ENCODE measurements at regions of chr1 and their contacts with region 1.

Region 1: GRCh38 chr1:9867408-9868243 is 42.4 kb downstream of the CTNNBIP1 start:
- DNase-seq: peak; percentile 88
- H3K4me3 ChIP-seq: no peak overlapping the region
- H3K27ac ChIP-seq: no peak overlapping the region
- H3K4me1 ChIP-seq: no peaks in the 10 kb centered on the region
- H3K27me3 ChIP-seq: no peaks in the 10 kb centered on the region
- CTCF ChIP-seq: peak; percentile 99

Region 2: DNA sequence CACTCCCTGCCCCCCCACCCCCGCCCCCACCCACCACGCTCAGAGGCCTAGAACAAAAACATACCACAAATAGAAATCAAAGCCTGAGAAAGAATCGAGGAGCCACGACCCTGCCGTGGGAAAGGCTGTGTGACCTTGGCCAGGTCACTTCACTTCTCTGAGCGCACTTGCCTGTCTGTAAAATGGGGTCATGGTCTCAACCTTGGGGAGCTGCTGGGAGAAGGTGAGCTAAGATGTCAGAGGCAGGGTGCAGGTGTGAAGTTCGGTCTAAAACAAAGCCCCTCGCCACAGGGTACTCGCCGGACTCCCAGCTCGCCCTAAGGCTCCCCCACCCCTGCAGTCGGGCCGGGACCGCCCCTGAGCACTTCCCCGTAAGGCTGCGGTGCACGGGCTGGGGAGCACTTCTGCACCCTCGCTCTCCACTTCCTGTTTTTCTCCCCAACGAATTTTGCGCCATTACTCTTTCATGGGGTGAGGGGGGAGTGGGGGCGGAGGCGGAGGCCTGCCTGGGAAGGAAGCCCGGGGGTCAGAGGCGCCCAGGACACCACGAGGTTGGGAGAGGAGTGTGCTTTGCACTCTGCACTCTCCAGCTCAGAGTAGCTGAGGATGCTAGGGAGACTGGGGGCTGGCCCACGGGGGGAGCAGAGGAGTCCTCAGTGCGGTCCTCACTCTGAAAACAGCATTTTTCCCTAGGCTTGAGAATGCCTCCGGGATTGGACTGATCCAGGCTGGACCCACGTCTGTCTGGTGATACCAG is 238.0 kb before region 1 on chr1:
- intact Hi-C with region 1: loop called (anchors 2 kb)
- DNase-seq: peak; percentile 50
- H3K4me3 ChIP-seq: peak overlapping the region; percentile 1
- H3K27ac ChIP-seq: peak overlapping the region; percentile 23
- H3K4me1 ChIP-seq: no peaks in the 10 kb centered on the region
- H3K27me3 ChIP-seq: no peaks in the 10 kb centered on the region
- CTCF ChIP-seq: no peak

Region 3: DNA sequence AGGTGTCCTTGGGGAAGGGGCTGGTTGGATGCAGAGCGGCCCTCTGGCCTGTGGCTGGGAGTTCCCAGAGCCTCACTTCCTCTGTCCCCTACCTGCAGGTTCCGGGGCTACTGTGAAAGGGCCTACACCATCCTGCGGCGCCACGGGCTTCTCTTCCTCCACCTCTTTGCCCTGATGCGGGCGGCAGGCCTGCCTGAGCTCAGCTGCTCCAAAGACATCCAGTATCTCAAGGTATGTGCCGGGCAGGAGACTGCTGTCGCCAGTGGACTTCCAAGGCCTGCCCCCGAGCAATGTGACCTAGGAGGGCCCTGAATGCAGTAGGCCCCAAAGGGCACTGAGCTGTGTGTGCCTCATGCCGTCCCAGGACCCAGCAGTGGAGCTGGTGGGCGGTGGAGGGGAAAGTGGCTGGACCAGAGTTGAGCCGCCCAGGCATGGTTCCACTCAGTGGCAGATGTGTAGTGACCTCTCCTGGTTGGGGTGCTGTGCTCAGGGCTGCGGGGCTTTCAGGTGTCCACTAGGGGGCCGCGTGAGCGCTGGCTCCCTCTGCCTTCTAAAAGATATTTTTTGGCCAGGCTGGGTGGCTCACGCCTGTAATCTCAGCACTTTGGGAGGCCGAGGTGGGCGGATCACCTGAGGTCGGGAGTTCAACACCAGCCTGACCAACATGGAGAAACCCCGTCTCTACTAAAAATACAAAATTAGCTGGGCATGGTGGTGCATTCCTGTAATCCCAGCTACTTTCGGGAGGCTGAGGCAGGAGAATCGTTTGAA is 142.7 kb before region 1 on chr1:
- intact Hi-C with region 1: loop called (anchors 5 kb)
- DNase-seq: peak; percentile 65
- H3K4me3 ChIP-seq: no peak overlapping the region
- H3K27ac ChIP-seq: no peak overlapping the region
- H3K4me1 ChIP-seq: no peaks in the 10 kb centered on the region
- H3K27me3 ChIP-seq: no peaks in the 10 kb centered on the region
- CTCF ChIP-seq: peak; percentile 85

Region 4: GRCh38 chr1:9784508-9785133 is 83.0 kb before region 1 on chr1:
- intact Hi-C with region 1: loop called (anchors 2 kb)
- DNase-seq: peak; percentile 71
- H3K4me3 ChIP-seq: no peak overlapping the region
- H3K27ac ChIP-seq: no peak overlapping the region
- H3K4me1 ChIP-seq: no peaks in the 10 kb centered on the region
- H3K27me3 ChIP-seq: no peaks in the 10 kb centered on the region
- CTCF ChIP-seq: peak; percentile 66

Region 5: GRCh38 chr1:9816199-9816598 is 51.4 kb before region 1 on chr1:
- intact Hi-C with region 1: no loop called
- DNase-seq: no peak
- H3K4me3 ChIP-seq: no peak overlapping the region
- H3K27ac ChIP-seq: peak overlapping the region; percentile 90
- H3K4me1 ChIP-seq: peaks cover 22% of the 10 kb centered on the region
- H3K27me3 ChIP-seq: no peaks in the 10 kb centered on the region
- CTCF ChIP-seq: no peak

Region 6: GRCh38 chr1:9892563-9893532 is 25.2 kb after region 1 on chr1:
- intact Hi-C with region 1: no loop called
- DNase-seq: no peak
- H3K4me3 ChIP-seq: no peak overlapping the region
- H3K27ac ChIP-seq: no peak overlapping the region
- H3K4me1 ChIP-seq: no peaks in the 10 kb centered on the region
- H3K27me3 ChIP-seq: no peaks in the 10 kb centered on the region
- CTCF ChIP-seq: no peak